Motor neuron (in vitro differentiated cells): ENCODE measurements at regions of chr17 and their contacts with region 1.

Region 1: DNA sequence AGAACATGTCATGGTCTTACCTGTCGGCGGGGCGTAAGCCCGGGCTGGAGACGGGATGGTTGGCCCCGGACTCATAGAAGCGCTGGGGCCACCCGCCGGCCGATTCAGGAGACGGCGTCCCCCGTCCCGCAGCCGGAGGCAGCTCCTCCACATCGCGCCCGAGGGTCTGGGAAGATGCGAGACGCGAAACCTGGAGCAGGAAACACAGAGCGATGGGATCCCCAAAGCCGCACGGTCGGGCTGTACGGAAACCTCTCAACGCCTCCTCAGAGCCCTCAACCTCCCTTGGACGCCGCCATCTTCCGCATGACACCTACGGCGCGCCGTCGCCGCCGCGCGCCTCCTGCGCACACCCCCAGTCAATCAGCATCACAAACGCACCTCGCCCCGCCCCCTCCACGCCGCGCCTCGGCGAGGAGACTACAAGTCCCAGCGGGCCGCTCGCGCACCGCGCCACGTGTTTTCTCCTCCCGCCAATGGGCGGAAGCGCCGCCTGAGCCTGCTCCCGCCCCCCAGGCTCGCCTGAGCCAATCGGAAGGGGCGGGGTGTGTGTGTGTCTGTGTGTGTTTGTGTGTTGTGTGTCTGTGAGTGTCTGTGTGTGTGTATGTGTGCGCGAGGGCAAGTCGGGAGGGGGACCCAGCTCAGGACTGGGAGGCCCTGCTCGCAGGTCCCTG is at the starts of genes ATPAF2 and GID4:
- ATAC-seq: peak; percentile 86 to 93 (median 90)
- H3K4me3 ChIP-seq: peak within 1 kb of the TSS; percentile 52 to 82 (median 57)
- H3K27ac ChIP-seq: peak within 1 kb of the TSS; percentile 44 to 65
- H3K4me1 ChIP-seq: peaks cover 13 to 16% of the 10 kb centered on the region in 2 donors
- total RNA-seq, gene ATPAF2: 12.7 to 38.9 (median 23.2) TPM
- total RNA-seq, gene GID4: 6.0 to 13.0 (median 8.2) TPM

Region 2: GRCh38 chr17:17890773-17891759 is 147.9 kb before region 1 on chr17:
- in situ Hi-C with region 1: loop called in 2 of 9 experiments (anchors 10 to 25 kb)
- ATAC-seq: peak in 6 of 8 experiments; percentile 29 to 90 (median 71)
- H3K4me3 ChIP-seq: no peak overlapping the region
- H3K27ac ChIP-seq: no peak overlapping the region
- H3K4me1 ChIP-seq: peaks cover 32% of the 10 kb centered on the region in 2 donors

Region 3: GRCh38 chr17:18129041-18129502 is 90.1 kb after region 1 on chr17:
- in situ Hi-C with region 1: no loop called
- ATAC-seq: peak in 4 of 8 experiments; percentile 29 to 97 (median 67)
- H3K4me3 ChIP-seq: no peak overlapping the region
- H3K27ac ChIP-seq: no peak overlapping the region
- H3K4me1 ChIP-seq: peaks cover 3 to 6% of the 10 kb centered on the region in 2 donors